GM12878 (cell line): ENCODE measurements at regions of chr10 and their contacts with region 1.

Region 1: GRCh38 chr10:19993714-19994315 is 177.6 kb downstream of the PLXDC2 start:
- DNase-seq: no peak
- ATAC-seq: peak; percentile 91
- H3K4me3 ChIP-seq: no peak overlapping the region
- H3K27ac ChIP-seq: no peak overlapping the region
- H3K4me1 ChIP-seq: no peaks in the 10 kb centered on the region
- H3K27me3 ChIP-seq: no peaks in the 10 kb centered on the region
- CTCF ChIP-seq: no peak
- EP300 ChIP-seq: peak in 1 of 2 experiments; percentile 24; a peak in 1 of 4 replicates
- POLR2A ChIP-seq: no peak
- RAD21 ChIP-seq: no peak

Region 2: GRCh38 chr10:19819419-19820033 is 174.3 kb before region 1 on chr10:
- CTCF ChIA-PET with region 1: no interaction called
- POLR2A ChIA-PET with region 1: no interaction called
- RAD21 ChIA-PET with region 1: no interaction called
- SMC1A ChIA-PET with region 1: no interaction called
- in situ Hi-C with region 1: no loop called
- intact Hi-C with region 1: loop called (anchors 1 kb)
- DNase-seq: no peak
- ATAC-seq: peak; percentile 10; the same call in 1 of the 3 replicates
- H3K4me3 ChIP-seq: no peak overlapping the region
- H3K27ac ChIP-seq: no peak overlapping the region
- H3K4me1 ChIP-seq: no peaks in the 10 kb centered on the region
- H3K27me3 ChIP-seq: peaks cover 1 to 3% of the 10 kb centered on the region in 2 experiments; a peak in 3 of 4 replicates
- CTCF ChIP-seq: peak; percentile 46 to 72 (median 55); a peak in 5 of 6 replicates
- EP300 ChIP-seq: no peak
- POLR2A ChIP-seq: no peak
- RAD21 ChIP-seq: peak; percentile 62

Region 3: GRCh38 chr10:19952224-19953010 is 41.4 kb before region 1 on chr10:
- CTCF ChIA-PET with region 1: interaction called, 3 read pairs
- POLR2A ChIA-PET with region 1: interaction called, 3 read pairs
- RAD21 ChIA-PET with region 1: interaction called, 3 read pairs
- SMC1A ChIA-PET with region 1: interaction called, 15 read pairs
- in situ Hi-C with region 1: no loop called
- intact Hi-C with region 1: no loop called
- DNase-seq: no peak
- ATAC-seq: no peak
- H3K4me3 ChIP-seq: no peak overlapping the region
- H3K27ac ChIP-seq: no peak overlapping the region
- H3K4me1 ChIP-seq: no peaks in the 10 kb centered on the region
- H3K27me3 ChIP-seq: no peaks in the 10 kb centered on the region
- CTCF ChIP-seq: no peak
- EP300 ChIP-seq: no peak
- POLR2A ChIP-seq: no peak
- RAD21 ChIP-seq: no peak

Region 4: DNA sequence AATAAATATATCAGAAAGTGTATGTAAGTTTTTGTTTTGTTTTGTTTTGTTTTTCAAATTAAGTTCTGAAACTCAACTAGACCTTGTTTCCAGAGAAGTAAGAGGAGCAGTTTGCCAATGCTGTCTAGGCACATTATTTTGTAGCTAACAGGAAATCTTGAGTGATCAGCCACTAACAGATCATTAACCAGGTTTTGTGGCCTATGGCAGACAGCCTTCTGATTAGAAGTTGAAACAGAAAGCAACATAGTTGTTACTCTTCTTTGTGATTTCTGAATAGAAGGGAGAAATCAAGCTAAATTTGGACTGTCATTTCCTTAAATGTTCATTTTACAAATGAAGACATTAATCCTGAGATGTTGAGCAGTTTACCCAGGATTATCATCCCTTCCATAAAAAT is 35.0 kb before region 1 on chr10:
- CTCF ChIA-PET with region 1: interaction called, 4 read pairs
- POLR2A ChIA-PET with region 1: interaction called, 3 read pairs
- RAD21 ChIA-PET with region 1: interaction called, 11 read pairs
- SMC1A ChIA-PET with region 1: interaction called, 15 read pairs
- in situ Hi-C with region 1: no loop called
- intact Hi-C with region 1: no loop called
- DNase-seq: peak; percentile 37
- ATAC-seq: peak; percentile 98
- H3K4me3 ChIP-seq: no peak overlapping the region
- H3K27ac ChIP-seq: no peak overlapping the region
- H3K4me1 ChIP-seq: no peaks in the 10 kb centered on the region
- H3K27me3 ChIP-seq: no peaks in the 10 kb centered on the region
- CTCF ChIP-seq: no peak
- EP300 ChIP-seq: no peak; a peak in 1 of 4 replicates
- POLR2A ChIP-seq: no peak
- RAD21 ChIP-seq: no peak

Region 5: GRCh38 chr10:20004087-20004523 is 10.3 kb after region 1 on chr10:
- CTCF ChIA-PET with region 1: no interaction called
- POLR2A ChIA-PET with region 1: interaction called, 3 read pairs
- RAD21 ChIA-PET with region 1: interaction called, 3 read pairs
- SMC1A ChIA-PET with region 1: interaction called, 11 read pairs
- in situ Hi-C with region 1: no loop called
- intact Hi-C with region 1: no loop called
- DNase-seq: peak; percentile 28
- ATAC-seq: peak; percentile 85
- H3K4me3 ChIP-seq: no peak overlapping the region
- H3K27ac ChIP-seq: peak overlapping the region; percentile 75
- H3K4me1 ChIP-seq: peaks cover 10% of the 10 kb centered on the region
- H3K27me3 ChIP-seq: no peaks in the 10 kb centered on the region
- CTCF ChIP-seq: no peak
- EP300 ChIP-seq: no peak
- POLR2A ChIP-seq: no peak
- RAD21 ChIP-seq: no peak